ENCODE measurements at regions of chr6 and their contacts with region 1.

Region 1: GRCh38 chr6:89999154-89999553 is 104.9 kb downstream of the GJA10 start:
- DNase-seq: peak; percentile 95
- H3K4me3 Mint-ChIP-seq: no peak overlapping the region
- H3K27ac Mint-ChIP-seq: no peak overlapping the region
- H3K4me1 Mint-ChIP-seq: peaks cover 13% of the 10 kb centered on the region
- H3K27me3 Mint-ChIP-seq: no peaks in the 10 kb centered on the region
- CTCF ChIP-seq: no peak

Region 2: DNA sequence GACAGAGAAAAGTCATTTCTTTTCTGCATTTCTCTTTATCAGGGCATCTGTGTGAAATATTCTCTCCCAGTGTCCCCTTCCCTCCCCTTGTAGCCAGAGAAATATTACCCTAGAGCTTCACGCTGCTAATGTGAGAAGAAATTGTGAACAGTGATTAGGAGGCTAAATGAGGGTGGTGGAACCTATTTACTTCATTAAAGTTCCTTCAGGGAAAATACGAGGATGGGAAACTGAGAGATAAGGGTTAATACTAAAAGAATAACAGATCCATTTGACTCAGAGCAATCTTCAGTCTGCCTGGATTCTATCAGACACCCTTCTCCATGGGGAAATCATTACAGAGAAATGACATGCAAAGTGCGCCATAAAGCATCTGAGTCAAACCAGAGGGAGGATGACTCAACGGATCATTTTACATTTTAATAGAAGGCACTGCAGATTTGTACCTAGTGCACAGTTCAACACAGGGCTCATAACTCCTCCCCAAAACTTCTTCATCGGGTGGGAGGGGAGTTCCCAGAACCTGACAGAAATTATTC is 26.4 kb after region 1 on chr6:
- CTCF ChIA-PET with region 1: no interaction called
- POLR2A ChIA-PET with region 1: interaction called, 11 read pairs
- intact Hi-C with region 1: no loop called
- DNase-seq: peak; percentile 87
- H3K4me3 Mint-ChIP-seq: no peak overlapping the region
- H3K27ac Mint-ChIP-seq: peak overlapping the region; percentile 41
- H3K4me1 Mint-ChIP-seq: peaks cover 17% of the 10 kb centered on the region
- H3K27me3 Mint-ChIP-seq: no peaks in the 10 kb centered on the region
- CTCF ChIP-seq: no peak

Region 3: GRCh38 chr6:90135667-90136066 is 136.5 kb after region 1 on chr6:
- CTCF ChIA-PET with region 1: no interaction called
- POLR2A ChIA-PET with region 1: no interaction called
- intact Hi-C with region 1: no loop called
- DNase-seq: peak; percentile 50
- H3K4me3 Mint-ChIP-seq: no peak overlapping the region
- H3K27ac Mint-ChIP-seq: peak overlapping the region; percentile 5
- H3K4me1 Mint-ChIP-seq: peaks cover 11% of the 10 kb centered on the region
- H3K27me3 Mint-ChIP-seq: no peaks in the 10 kb centered on the region
- CTCF ChIP-seq: no peak

Measured in MCF 10A (cell line).